Endothelial cell of umbilical vein (primary cell): ENCODE measurements at regions of chr19 and their contacts with region 1.

Region 1: GRCh38 chr19:51926784-51927742 is at the start of gene ZNF613:
- DNase-seq: peak; percentile 94
- H3K4me3 ChIP-seq: peak within 1 kb of the TSS; percentile 52 to 82 (median 75)
- H3K27ac ChIP-seq: peak within 1 kb of the TSS; percentile 25
- H3K4me1 ChIP-seq: peaks cover 8% of the 10 kb centered on the region
- H3K27me3 ChIP-seq: no peaks in the 10 kb centered on the region
- CTCF ChIP-seq: no peak
- POLR2A ChIP-seq: peak; percentile 50
- total RNA-seq, gene ZNF613: 4.4 and 6.5 TPM in 2 replicates

Region 2: GRCh38 chr19:51712460-51713083 is 214.5 kb before region 1 on chr19:
- CTCF ChIA-PET with region 1: no interaction called
- POLR2A ChIA-PET with region 1: no interaction called
- dilution Hi-C with region 1: no loop called
- intact Hi-C with region 1: no loop called
- DNase-seq: no peak
- H3K4me3 ChIP-seq: no peak overlapping the region
- H3K27ac ChIP-seq: no peak overlapping the region
- H3K4me1 ChIP-seq: no peaks in the 10 kb centered on the region
- H3K27me3 ChIP-seq: no peaks in the 10 kb centered on the region
- CTCF ChIP-seq: peak; percentile 14 to 34
- POLR2A ChIP-seq: no peak

Region 3: DNA sequence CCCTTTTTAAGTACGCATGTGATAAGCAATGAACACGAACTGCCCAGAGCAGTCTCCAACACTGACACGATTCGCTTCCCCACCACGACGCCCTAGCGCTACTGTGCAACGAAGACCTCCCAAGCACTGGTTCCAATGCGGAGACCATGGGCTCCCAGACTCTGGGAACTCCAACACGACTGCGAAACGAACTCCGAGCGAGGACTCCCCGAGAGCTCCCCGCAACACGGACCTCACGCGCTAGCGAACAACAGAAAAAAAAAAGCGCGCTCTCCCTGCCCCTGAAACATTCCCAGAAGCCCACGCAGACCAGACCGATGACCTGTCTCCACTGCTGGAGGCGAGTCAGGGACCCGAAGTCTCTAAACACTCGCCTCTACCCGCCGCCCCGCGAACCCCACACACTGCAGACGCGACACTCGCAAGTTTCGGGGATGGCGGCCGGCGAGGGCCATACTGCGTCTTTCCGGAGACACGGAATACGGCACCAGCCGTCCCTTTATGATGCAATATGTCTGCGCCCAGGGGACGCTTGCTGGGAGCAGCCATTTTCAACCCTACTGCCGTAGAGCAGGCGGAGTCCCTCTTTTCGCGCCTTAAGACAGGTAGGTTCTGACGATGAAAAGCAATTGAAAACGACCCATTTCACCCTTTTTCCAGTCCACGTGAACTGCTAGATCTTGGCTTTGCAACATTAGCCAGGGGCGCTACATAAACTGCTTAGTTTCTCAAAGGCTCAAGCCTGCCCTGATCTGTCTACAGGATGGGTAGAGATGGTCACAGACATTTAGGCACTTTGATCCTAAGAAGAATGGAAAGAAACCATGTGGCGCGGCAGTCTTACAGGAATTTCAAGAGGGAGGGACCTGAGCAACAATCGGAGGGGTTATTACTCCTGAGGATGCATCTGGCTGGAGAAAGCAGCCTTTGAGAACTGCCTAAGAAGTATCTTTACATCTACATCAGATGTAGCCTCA is 39.3 kb before region 1 on chr19 and contains the start of gene ZNF577:
- CTCF ChIA-PET with region 1: no interaction called
- POLR2A ChIA-PET with region 1: no interaction called
- dilution Hi-C with region 1: no loop called
- intact Hi-C with region 1: loop called (anchors 2 kb)
- DNase-seq: peak; percentile 89
- H3K4me3 ChIP-seq: peak within 1 kb of the TSS; percentile 40 to 73 (median 58)
- H3K27ac ChIP-seq: peak within 1 kb of the TSS; percentile 4
- H3K4me1 ChIP-seq: no peaks in the 10 kb centered on the region
- H3K27me3 ChIP-seq: no peaks in the 10 kb centered on the region
- CTCF ChIP-seq: no peak
- POLR2A ChIP-seq: peak; percentile 69
- total RNA-seq, gene ZNF577: 3.2 and 4.0 TPM in 2 replicates

Region 4: GRCh38 chr19:51904331-51905165 is 22.5 kb before region 1 on chr19 and contains the start of gene ZNF649:
- CTCF ChIA-PET with region 1: no interaction called
- POLR2A ChIA-PET with region 1: no interaction called
- dilution Hi-C with region 1: no loop called
- intact Hi-C with region 1: loop called (anchors 1 kb)
- DNase-seq: peak; percentile 84
- H3K4me3 ChIP-seq: peak within 1 kb of the TSS; percentile 91 to 98 (median 94)
- H3K27ac ChIP-seq: peak within 1 kb of the TSS; percentile 46
- H3K4me1 ChIP-seq: no peaks in the 10 kb centered on the region
- H3K27me3 ChIP-seq: no peaks in the 10 kb centered on the region
- CTCF ChIP-seq: no peak
- POLR2A ChIP-seq: no peak
- total RNA-seq, gene ZNF649: 8.6 and 9.0 TPM in 2 replicates

Region 5: GRCh38 chr19:51986309-51987291 is 59.5 kb after region 1 on chr19 and contains the start of gene ZNF350:
- CTCF ChIA-PET with region 1: no interaction called
- POLR2A ChIA-PET with region 1: no interaction called
- dilution Hi-C with region 1: no loop called
- intact Hi-C with region 1: loop called (anchors 1 kb)
- DNase-seq: peak; percentile 95
- H3K4me3 ChIP-seq: peak within 1 kb of the TSS; percentile 58 to 80 (median 61)
- H3K27ac ChIP-seq: peak within 1 kb of the TSS; percentile 48
- H3K4me1 ChIP-seq: peaks cover 2% of the 10 kb centered on the region
- H3K27me3 ChIP-seq: no peaks in the 10 kb centered on the region
- CTCF ChIP-seq: no peak
- POLR2A ChIP-seq: no peak
- total RNA-seq, gene ZNF350: 8.4 and 9.8 TPM in 2 replicates

Region 6: DNA sequence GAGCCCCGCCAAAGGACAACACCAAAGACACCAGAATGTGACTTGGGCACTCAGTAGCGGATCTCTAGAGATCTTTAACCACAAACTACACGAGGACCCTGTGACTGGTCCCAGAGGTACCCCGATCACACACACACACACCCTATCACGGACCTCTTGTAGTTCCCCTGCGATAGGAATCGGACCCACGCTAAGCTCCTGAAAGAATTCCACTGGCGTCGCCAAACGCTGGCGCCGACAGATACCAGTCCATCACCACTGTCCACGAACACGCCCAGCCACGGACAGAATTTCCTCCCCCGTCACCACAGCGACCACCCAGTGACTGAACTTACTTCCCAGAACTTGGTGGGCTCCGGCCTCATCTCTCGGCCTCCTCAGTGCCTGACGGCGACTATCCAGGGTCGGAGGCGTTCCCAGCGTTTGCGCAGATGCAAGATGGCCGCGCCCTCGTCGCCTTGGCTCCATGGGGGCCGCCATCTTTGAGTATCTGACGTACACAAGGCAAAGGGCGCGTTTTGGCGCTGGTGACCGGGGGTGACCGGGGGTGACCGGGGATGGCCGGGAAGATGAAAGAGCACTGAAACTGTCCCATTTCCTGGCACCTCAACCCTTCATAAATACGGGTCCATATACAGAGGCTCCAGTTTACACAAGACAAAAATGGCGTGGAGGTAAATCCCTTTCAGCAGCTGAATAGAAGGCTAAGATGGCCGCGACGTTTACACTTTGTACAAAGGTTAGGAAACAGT is 80.9 kb after region 1 on chr19 and contains the start of gene ZNF615:
- CTCF ChIA-PET with region 1: no interaction called
- POLR2A ChIA-PET with region 1: no interaction called
- dilution Hi-C with region 1: no loop called
- intact Hi-C with region 1: loop called (anchors 2 kb)
- DNase-seq: peak; percentile 91
- H3K4me3 ChIP-seq: peak within 1 kb of the TSS; percentile 57 to 76 (median 69)
- H3K27ac ChIP-seq: peak within 1 kb of the TSS; percentile 83
- H3K4me1 ChIP-seq: peaks cover 7% of the 10 kb centered on the region
- H3K27me3 ChIP-seq: no peaks in the 10 kb centered on the region
- CTCF ChIP-seq: no peak
- POLR2A ChIP-seq: no peak
- total RNA-seq, gene ZNF615: 4.5 and 5.1 TPM in 2 replicates

Region 7: DNA sequence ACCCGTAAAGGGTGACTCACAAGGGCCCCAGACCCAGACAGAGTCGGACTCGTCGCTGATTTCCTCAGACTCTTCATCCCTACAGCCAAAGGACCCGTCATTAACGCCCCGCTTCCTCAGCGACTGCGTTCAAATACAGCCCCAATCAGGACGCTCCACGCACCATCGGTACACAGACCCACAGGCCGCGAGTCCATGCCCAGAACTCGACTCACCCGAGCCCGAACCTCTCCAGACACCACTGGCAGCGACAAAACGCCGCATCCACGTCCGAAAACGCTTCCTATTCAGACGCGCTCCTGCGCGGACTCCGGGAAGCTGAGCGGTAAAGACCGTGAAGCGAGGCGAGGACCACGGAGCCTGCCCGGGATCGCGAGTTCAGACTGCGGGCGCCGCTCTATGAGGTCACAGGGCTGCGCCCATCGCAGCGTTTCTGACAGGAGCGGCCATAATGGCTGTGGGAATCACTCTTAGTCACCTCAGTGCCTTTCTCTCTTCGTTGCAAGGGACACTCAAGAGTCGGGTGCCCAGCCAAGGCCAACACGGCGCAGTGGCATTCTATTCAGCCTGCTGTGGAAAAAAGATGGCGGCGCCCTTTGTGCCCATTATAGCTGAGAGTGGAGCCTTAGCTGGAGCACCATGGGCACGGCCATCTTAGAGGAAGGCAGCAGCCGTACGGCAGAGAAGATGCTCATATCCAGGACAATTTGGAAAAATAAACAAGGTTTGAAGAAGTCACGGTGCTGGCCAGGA is 101.1 kb after region 1 on chr19 and contains the start of gene ZNF614:
- CTCF ChIA-PET with region 1: no interaction called
- POLR2A ChIA-PET with region 1: no interaction called
- dilution Hi-C with region 1: no loop called
- intact Hi-C with region 1: loop called (anchors 5 kb)
- DNase-seq: peak; percentile 92
- H3K4me3 ChIP-seq: peak within 1 kb of the TSS; percentile 59 to 90 (median 87)
- H3K27ac ChIP-seq: peak within 1 kb of the TSS; percentile 93
- H3K4me1 ChIP-seq: peaks cover 6% of the 10 kb centered on the region
- H3K27me3 ChIP-seq: no peaks in the 10 kb centered on the region
- CTCF ChIP-seq: no peak
- POLR2A ChIP-seq: peak; percentile 86
- total RNA-seq, gene ZNF614: 5.6 and 7.8 TPM in 2 replicates

Region 8: DNA sequence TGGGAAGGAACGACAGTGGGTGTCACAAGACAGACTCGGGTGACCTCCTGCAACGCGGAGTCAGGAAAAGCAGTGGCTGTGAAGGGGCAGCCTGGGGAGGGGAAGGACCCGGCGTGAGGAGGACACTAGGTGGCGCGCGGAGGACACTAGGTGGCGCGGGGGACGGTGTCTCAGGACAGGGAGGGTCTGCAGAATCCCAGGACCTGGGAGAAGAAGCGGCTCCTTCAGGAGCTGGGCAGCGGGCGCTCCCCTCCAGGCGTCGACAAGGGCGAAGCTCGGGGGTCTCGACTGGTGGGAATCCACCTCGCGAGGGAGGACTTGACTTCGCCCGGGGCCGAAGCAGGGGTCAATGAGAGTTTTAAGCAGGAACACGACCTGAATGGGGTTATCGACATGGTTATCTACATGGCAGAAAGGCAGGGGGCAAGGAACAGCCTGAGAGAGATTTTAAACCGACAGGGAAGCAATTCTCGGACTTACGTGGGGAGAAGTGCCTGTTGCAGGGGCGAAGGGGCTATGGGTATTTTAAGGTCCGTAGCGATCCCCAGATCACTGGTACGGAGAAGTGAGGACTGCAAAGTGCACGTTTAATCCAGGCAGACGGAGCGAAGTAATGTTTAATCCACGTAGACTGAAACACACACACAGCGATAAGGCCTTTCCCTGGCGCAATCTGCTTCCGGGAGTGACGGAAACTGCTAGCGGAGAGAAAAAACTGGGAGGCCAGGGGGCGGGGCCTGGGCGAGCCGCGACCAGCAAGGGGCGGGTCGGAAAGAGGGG is 212.4 kb after region 1 on chr19 and contains the start of gene ZNF616:
- CTCF ChIA-PET with region 1: no interaction called
- POLR2A ChIA-PET with region 1: no interaction called
- dilution Hi-C with region 1: no loop called
- intact Hi-C with region 1: loop called (anchors 10 kb)
- DNase-seq: peak; percentile 95
- H3K4me3 ChIP-seq: peak within 1 kb of the TSS; percentile 55 to 88 (median 72)
- H3K27ac ChIP-seq: peak within 1 kb of the TSS; percentile 66
- H3K4me1 ChIP-seq: peaks cover 6% of the 10 kb centered on the region
- H3K27me3 ChIP-seq: no peaks in the 10 kb centered on the region
- CTCF ChIP-seq: peak; percentile 59 to 77
- POLR2A ChIP-seq: peak; percentile 78
- total RNA-seq, gene ZNF616: 8.7 and 9.1 TPM in 2 replicates